ENCODE measurements at regions of chr14 and their contacts with region 1.

Region 1: DNA sequence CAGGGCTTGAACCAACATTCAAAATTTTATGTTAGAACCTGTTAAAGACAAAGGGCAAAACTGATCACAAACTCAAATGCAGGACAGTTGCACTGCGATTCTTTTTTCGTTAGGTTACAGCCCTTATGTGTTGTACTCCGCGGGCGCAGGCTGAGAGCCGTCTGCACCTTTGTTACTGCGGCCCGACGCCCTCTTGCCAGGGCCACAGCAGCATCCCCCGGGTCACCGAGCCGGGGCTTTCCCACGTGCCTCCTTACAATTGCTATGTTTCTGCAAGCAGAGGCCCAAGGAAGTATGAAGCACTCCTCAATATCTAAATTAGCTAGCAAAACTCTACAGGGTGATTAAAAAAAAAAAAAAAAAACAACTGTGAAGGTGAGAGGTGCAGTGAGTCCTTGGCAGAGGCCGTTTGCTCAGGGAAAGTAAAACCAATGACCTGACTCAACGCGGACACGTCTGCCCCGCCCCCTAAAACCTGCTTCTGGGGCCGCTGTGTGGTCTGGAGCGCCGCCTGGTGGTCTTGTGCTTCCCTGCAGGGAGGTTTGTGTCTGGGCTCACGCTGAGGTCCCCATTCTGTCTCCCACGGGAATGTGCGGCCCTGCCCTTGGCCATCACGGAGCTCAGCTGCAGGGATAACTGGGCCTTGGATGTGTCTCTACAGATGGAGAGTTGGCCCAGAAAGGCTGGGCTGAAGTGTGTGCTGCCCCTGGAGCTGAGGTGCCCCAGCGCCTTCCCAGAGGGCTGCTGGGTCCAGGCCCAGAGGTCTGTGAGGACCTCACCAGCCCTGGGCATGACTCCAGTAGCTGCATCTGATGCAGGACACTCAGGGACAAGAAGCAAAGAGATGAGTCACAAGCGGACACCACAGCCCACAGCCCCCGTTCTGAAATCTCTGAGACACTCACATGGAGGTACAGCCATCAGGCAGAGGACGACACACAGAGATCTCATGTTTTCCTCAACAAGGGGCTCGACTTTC is 418.5 kb downstream of the TMEM121 start:
- DNase-seq: peak; percentile 76
- ATAC-seq: peak; percentile 70
- H3K4me3 ChIP-seq: peak overlapping the region in 1 of 5 experiments; percentile 29
- H3K4me3 Mint-ChIP-seq: peak overlapping the region; percentile 62
- H3K27ac ChIP-seq: no peak overlapping the region
- H3K27ac Mint-ChIP-seq: peak overlapping the region; percentile 65
- H3K4me1 ChIP-seq: peaks cover 13 to 38% of the 10 kb centered on the region in 2 donors
- H3K4me1 Mint-ChIP-seq: peaks cover 33% of the 10 kb centered on the region
- H3K27me3 ChIP-seq: no peaks in the 10 kb centered on the region
- H3K27me3 Mint-ChIP-seq: no peaks in the 10 kb centered on the region
- CTCF ChIP-seq: peak; percentile 64

Region 2: DNA sequence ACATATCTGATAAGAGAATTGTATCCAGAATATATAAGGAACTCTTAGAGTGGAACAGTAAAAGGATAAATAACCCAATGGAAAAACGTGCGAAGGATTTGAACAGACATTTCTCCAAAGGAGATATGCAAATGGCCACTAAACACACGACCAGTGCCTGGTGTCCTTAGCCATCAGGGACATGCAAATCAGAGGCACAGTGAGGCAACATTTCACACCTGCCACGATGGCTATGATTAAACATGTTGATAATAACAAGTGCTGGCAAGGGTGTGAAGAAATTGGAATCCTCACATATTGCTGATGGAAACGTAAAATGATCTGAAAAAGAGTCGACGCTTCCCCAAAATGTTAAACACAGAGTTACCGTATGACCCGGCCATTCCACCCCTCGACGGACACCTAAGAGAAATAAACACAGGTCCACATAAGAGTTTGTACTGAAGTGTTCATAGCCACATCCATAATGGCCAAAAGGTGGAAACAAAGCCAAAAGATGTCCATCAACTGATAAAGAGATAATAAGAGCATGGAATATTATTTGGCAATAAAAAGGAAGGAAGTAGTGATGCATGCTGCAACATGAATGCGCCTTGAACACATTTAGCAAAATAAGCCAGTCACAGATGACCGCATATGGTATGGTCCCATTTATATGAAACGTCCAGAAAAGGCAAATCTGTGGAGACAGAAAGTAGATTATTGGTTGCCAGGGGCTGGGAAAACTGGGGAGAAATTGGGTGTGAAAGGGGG is 424.8 kb before region 1 on chr14:
- CTCF ChIA-PET with region 1: no interaction called
- POLR2A ChIA-PET with region 1: interaction called, 11 read pairs
- intact Hi-C with region 1: no loop called
- DNase-seq: no peak
- ATAC-seq: no peak
- H3K4me3 ChIP-seq: no peak overlapping the region
- H3K4me3 Mint-ChIP-seq: no peak overlapping the region
- H3K27ac ChIP-seq: no peak overlapping the region
- H3K27ac Mint-ChIP-seq: no peak overlapping the region
- H3K4me1 ChIP-seq: no peaks in the 10 kb centered on the region
- H3K4me1 Mint-ChIP-seq: peaks cover 2% of the 10 kb centered on the region
- H3K27me3 ChIP-seq: peaks cover 0 to 12% (median 5%) of the 10 kb centered on the region in 4 experiments
- H3K27me3 Mint-ChIP-seq: peaks cover 31% of the 10 kb centered on the region
- CTCF ChIP-seq: no peak

Region 3: GRCh38 chr14:105666420-105666819 is 278.5 kb before region 1 on chr14:
- CTCF ChIA-PET with region 1: no interaction called
- POLR2A ChIA-PET with region 1: no interaction called
- intact Hi-C with region 1: loop called (anchors 10 kb)
- DNase-seq: no peak
- ATAC-seq: no peak
- H3K4me3 ChIP-seq: no peak overlapping the region
- H3K4me3 Mint-ChIP-seq: no peak overlapping the region
- H3K27ac ChIP-seq: no peak overlapping the region
- H3K27ac Mint-ChIP-seq: no peak overlapping the region
- H3K4me1 ChIP-seq: peaks cover 0 to 15% of the 10 kb centered on the region in 2 donors
- H3K4me1 Mint-ChIP-seq: peaks cover 14% of the 10 kb centered on the region
- H3K27me3 ChIP-seq: no peaks in the 10 kb centered on the region
- H3K27me3 Mint-ChIP-seq: no peaks in the 10 kb centered on the region
- CTCF ChIP-seq: no peak

Region 4: DNA sequence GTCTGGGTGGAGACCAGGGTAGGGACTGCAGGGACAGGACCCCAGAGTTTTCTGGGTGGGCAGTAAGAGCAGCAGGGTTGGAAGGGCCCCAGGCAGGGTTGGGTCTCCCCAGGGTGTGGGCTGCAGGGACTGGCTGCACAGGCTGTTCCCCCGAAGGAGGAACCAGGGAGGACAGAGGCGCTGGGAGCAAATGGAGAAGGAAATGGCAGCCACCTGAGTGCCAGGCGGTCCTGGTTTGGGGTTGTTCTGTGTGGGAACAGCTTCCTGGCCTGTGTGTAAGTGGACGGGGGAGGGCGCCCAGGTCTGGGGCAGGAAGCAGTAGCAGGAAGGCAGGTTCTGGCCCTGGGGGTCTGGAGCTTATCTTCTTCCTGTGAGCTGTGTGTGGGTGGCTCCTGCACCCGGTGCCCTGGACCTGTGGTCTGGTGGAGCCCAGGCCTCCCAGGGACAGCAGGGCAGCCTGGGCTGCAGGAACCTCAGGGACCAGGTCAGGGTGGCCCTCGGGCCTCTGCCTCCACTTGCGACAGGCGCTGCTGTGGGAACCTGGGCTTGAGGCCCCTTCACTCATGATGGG is 45.8 kb before region 1 on chr14:
- CTCF ChIA-PET with region 1: no interaction called
- POLR2A ChIA-PET with region 1: no interaction called
- intact Hi-C with region 1: no loop called
- DNase-seq: no peak
- ATAC-seq: no peak
- H3K4me3 ChIP-seq: peak overlapping the region in 3 of 5 experiments; percentile 25 to 43 (median 37)
- H3K4me3 Mint-ChIP-seq: peak overlapping the region; percentile 71
- H3K27ac ChIP-seq: no peak overlapping the region
- H3K27ac Mint-ChIP-seq: peak overlapping the region; percentile 67
- H3K4me1 ChIP-seq: peaks cover 0 to 3% of the 10 kb centered on the region in 2 donors
- H3K4me1 Mint-ChIP-seq: peaks cover 14% of the 10 kb centered on the region
- H3K27me3 ChIP-seq: no peaks in the 10 kb centered on the region
- H3K27me3 Mint-ChIP-seq: no peaks in the 10 kb centered on the region
- CTCF ChIP-seq: no peak

Region 5: GRCh38 chr14:105999361-106000028 is 54.6 kb after region 1 on chr14:
- CTCF ChIA-PET with region 1: interaction called, 6 read pairs
- POLR2A ChIA-PET with region 1: no interaction called
- intact Hi-C with region 1: loop called (anchors 10 kb)
- DNase-seq: peak; percentile 80
- ATAC-seq: peak; percentile 80
- H3K4me3 ChIP-seq: no peak overlapping the region
- H3K4me3 Mint-ChIP-seq: no peak overlapping the region
- H3K27ac ChIP-seq: no peak overlapping the region
- H3K27ac Mint-ChIP-seq: no peak overlapping the region
- H3K4me1 ChIP-seq: peaks cover 0 to 10% of the 10 kb centered on the region in 2 donors
- H3K4me1 Mint-ChIP-seq: peaks cover 10% of the 10 kb centered on the region
- H3K27me3 ChIP-seq: no peaks in the 10 kb centered on the region
- H3K27me3 Mint-ChIP-seq: no peaks in the 10 kb centered on the region
- CTCF ChIP-seq: peak; percentile 49

Region 6: DNA sequence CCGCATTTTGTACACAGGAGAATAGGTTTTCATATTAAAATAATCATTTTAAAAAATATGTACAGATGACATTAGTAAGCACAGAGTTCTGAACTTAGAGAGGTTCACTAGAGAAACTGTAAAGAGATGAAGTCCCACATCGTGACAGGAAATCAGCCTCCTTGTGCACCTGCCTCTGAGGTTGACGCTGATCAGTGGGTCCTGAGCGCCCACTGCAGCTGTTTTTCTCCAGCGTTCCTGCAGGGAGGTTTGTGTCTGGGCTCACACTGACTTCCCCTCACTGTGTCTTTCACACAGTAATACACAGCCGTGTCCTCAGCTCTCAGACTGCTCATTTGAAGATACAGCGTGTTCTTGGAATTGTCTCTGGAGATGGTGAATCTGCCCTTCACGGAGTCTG is 142.9 kb after region 1 on chr14:
- CTCF ChIA-PET with region 1: no interaction called
- POLR2A ChIA-PET with region 1: no interaction called
- intact Hi-C with region 1: no loop called
- DNase-seq: peak; percentile 8
- ATAC-seq: no peak
- H3K4me3 ChIP-seq: no peak overlapping the region
- H3K4me3 Mint-ChIP-seq: no peak overlapping the region
- H3K27ac ChIP-seq: no peak overlapping the region
- H3K27ac Mint-ChIP-seq: no peak overlapping the region
- H3K4me1 ChIP-seq: peaks cover 0 to 12% of the 10 kb centered on the region in 2 donors
- H3K4me1 Mint-ChIP-seq: peaks cover 3% of the 10 kb centered on the region
- H3K27me3 ChIP-seq: no peaks in the 10 kb centered on the region
- H3K27me3 Mint-ChIP-seq: no peaks in the 10 kb centered on the region
- CTCF ChIP-seq: no peak